Activated B cell treated with CpG ODN at 0.5 μM for 24 hours (primary cell): ENCODE measurements at regions of chr4 and their contacts with region 1.

Region 1: GRCh38 chr4:102500696-102501446 is at the start of gene NFKB1:
- DNase-seq: peak; percentile 76
- ATAC-seq: peak; percentile 71
- H3K4me3 Mint-ChIP-seq: peak within 1 kb of the TSS; percentile 97
- H3K27ac Mint-ChIP-seq: peak within 1 kb of the TSS; percentile 95
- H3K4me1 Mint-ChIP-seq: peaks cover 31% of the 10 kb centered on the region
- H3K27me3 Mint-ChIP-seq: no peaks in the 10 kb centered on the region
- CTCF ChIP-seq: no peak
- total RNA-seq, gene NFKB1: 274 and 308 TPM in 2 replicates

Region 2: GRCh38 chr4:101790521-101791188 is 710.2 kb before region 1 on chr4 and contains the start of gene BANK1:
- CTCF ChIA-PET with region 1: no interaction called
- POLR2A ChIA-PET with region 1: no interaction called
- intact Hi-C with region 1: loop called (anchors 10 kb)
- DNase-seq: peak; percentile 86
- ATAC-seq: peak; percentile 89
- H3K4me3 Mint-ChIP-seq: peak within 1 kb of the TSS; percentile 97
- H3K27ac Mint-ChIP-seq: peak within 1 kb of the TSS; percentile 99
- H3K4me1 Mint-ChIP-seq: peaks cover 66% of the 10 kb centered on the region
- H3K27me3 Mint-ChIP-seq: no peaks in the 10 kb centered on the region
- CTCF ChIP-seq: peak; percentile 37
- total RNA-seq, gene BANK1: 307 and 336 TPM in 2 replicates

Region 3: GRCh38 chr4:102449751-102450352 is 51.0 kb before region 1 on chr4:
- CTCF ChIA-PET with region 1: no interaction called
- POLR2A ChIA-PET with region 1: interaction called, 3 read pairs
- intact Hi-C with region 1: loop called (anchors 2 kb)
- DNase-seq: no peak
- ATAC-seq: peak; percentile 85
- H3K4me3 Mint-ChIP-seq: no peak overlapping the region
- H3K27ac Mint-ChIP-seq: no peak overlapping the region
- H3K4me1 Mint-ChIP-seq: peaks cover 21% of the 10 kb centered on the region
- H3K27me3 Mint-ChIP-seq: no peaks in the 10 kb centered on the region
- CTCF ChIP-seq: no peak

Region 4: GRCh38 chr4:102525097-102525496 is 24.2 kb after region 1 on chr4:
- CTCF ChIA-PET with region 1: interaction called, 3 read pairs
- POLR2A ChIA-PET with region 1: interaction called, 29 read pairs
- intact Hi-C with region 1: loop called (anchors 1 kb)
- DNase-seq: no peak
- ATAC-seq: no peak
- H3K4me3 Mint-ChIP-seq: peak overlapping the region; percentile 46
- H3K27ac Mint-ChIP-seq: peak overlapping the region; percentile 50
- H3K4me1 Mint-ChIP-seq: peaks cover 88% of the 10 kb centered on the region
- H3K27me3 Mint-ChIP-seq: no peaks in the 10 kb centered on the region
- CTCF ChIP-seq: no peak

Region 5: GRCh38 chr4:102564399-102565059 is 63.7 kb after region 1 on chr4:
- CTCF ChIA-PET with region 1: interaction called, 5 read pairs
- POLR2A ChIA-PET with region 1: interaction called, 87 read pairs
- intact Hi-C with region 1: loop called (anchors 1 kb)
- DNase-seq: peak; percentile 37
- ATAC-seq: peak; percentile 91
- H3K4me3 Mint-ChIP-seq: peak overlapping the region; percentile 61
- H3K27ac Mint-ChIP-seq: peak overlapping the region; percentile 90
- H3K4me1 Mint-ChIP-seq: peaks cover 85% of the 10 kb centered on the region
- H3K27me3 Mint-ChIP-seq: no peaks in the 10 kb centered on the region
- CTCF ChIP-seq: no peak

Region 6: DNA sequence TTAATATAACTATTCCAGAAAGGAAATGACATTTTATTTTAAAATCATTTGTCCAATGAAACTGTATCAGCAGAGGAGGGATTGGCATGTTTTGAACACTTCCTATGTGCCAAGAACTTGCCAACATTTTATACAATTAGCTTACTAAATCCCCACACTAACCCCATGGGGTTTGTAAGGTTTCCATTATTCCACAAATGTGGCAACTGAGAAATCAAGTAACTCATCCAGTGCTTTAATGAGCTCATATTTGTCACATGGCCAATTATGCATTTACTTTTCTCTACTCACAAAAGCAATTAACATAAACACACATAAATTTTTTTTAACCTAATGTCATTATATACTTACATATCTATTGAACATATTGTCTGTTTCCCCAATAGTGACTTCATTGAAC is 222.6 kb after region 1 on chr4:
- CTCF ChIA-PET with region 1: no interaction called
- POLR2A ChIA-PET with region 1: no interaction called
- intact Hi-C with region 1: no loop called
- DNase-seq: no peak
- ATAC-seq: no peak
- H3K4me3 Mint-ChIP-seq: no peak overlapping the region
- H3K27ac Mint-ChIP-seq: no peak overlapping the region
- H3K4me1 Mint-ChIP-seq: peaks cover 7% of the 10 kb centered on the region
- H3K27me3 Mint-ChIP-seq: no peaks in the 10 kb centered on the region
- CTCF ChIP-seq: no peak

Region 7: GRCh38 chr4:103019308-103020124 is 518.6 kb after region 1 on chr4 and contains the start of gene SLC9B1:
- CTCF ChIA-PET with region 1: no interaction called
- POLR2A ChIA-PET with region 1: interaction called, 3 read pairs
- intact Hi-C with region 1: loop called (anchors 2 kb)
- DNase-seq: peak; percentile 91
- ATAC-seq: peak; percentile 98
- H3K4me3 Mint-ChIP-seq: peak within 1 kb of the TSS; percentile 92
- H3K27ac Mint-ChIP-seq: peak within 1 kb of the TSS; percentile 96
- H3K4me1 Mint-ChIP-seq: peaks cover 28% of the 10 kb centered on the region
- H3K27me3 Mint-ChIP-seq: no peaks in the 10 kb centered on the region
- CTCF ChIP-seq: no peak
- total RNA-seq, gene SLC9B1: 1.2 and 2.5 TPM in 2 replicates